PC-9 (cell line): ENCODE measurements at regions of chr21 and their contacts with region 1.

Region 1: DNA sequence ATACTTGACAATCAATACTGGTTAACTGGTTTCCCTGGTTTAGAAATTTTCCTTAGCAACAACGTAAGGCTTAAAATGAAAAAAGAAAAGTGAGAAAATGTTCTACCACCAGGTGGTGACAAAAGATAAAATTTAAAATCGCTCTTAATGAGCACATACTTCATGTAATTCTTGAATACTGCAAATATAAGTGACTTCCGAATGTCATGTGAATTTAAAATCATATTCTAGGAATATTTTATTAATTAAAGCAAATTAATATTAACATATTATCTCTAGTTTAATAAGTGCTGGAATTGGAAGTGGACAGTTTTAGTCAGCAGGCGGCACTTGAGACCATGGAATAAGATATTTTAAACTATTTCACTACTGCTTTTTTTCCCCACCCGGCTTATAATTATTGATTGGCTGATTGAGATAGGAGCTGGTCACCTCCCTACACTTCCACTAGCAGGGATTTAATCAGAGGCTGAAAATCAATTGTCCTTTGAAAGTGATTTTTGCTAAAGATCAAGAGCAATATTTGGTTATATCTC is 5.0 kb upstream of the ADAMTS1 start:
- DNase-seq: no peak
- H3K4me3 ChIP-seq: no peak overlapping the region
- H3K27ac ChIP-seq: no peak overlapping the region
- H3K4me1 ChIP-seq: no peaks in the 10 kb centered on the region
- H3K27me3 ChIP-seq: peaks cover 7% of the 10 kb centered on the region
- CTCF ChIP-seq: peak; percentile 45

Region 2: GRCh38 chr21:27564684-27565301 is 714.6 kb after region 1 on chr21:
- CTCF ChIA-PET with region 1: no interaction called
- POLR2A ChIA-PET with region 1: no interaction called
- intact Hi-C with region 1: loop called (anchors 1 kb)
- DNase-seq: peak in 1 of 2 experiments; percentile 0
- H3K4me3 ChIP-seq: no peak overlapping the region
- H3K27ac ChIP-seq: no peak overlapping the region
- H3K4me1 ChIP-seq: no peaks in the 10 kb centered on the region
- H3K27me3 ChIP-seq: no peaks in the 10 kb centered on the region
- CTCF ChIP-seq: peak; percentile 47

Region 3: DNA sequence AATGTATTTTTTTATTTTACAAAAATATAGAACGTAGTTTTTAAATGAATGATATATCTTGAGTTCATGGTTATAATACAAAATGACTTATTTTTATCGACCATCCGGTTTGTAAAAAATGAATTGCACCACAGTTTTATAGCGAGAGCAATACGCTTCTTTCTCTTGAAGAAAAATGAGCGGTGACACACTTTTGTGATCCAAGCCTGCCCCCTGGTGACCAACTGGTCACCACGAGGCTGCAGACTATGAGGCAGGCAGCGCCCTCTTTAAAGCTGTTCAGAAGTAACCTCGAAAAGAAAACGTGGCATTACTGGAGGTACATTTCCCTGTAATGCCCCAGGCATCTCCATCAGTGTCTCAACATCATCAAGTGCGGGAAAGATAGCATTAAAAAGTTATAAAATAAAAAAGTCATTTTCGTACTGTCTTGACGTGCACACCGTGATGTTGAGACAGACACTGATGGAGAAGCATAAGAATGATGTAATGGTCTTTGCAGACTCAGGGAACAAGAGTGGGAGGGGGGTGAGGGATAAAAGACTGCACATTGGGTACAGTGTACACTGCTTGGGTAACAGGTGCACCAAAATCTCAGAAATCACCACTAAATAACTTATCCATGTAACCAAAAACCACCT is 850.9 kb after region 1 on chr21:
- CTCF ChIA-PET with region 1: no interaction called
- POLR2A ChIA-PET with region 1: no interaction called
- intact Hi-C with region 1: loop called (anchors 1 kb)
- DNase-seq: peak; percentile 50 to 52
- H3K4me3 ChIP-seq: no peak overlapping the region
- H3K27ac ChIP-seq: no peak overlapping the region
- H3K4me1 ChIP-seq: no peaks in the 10 kb centered on the region
- H3K27me3 ChIP-seq: no peaks in the 10 kb centered on the region
- CTCF ChIP-seq: peak; percentile 80